Posterior vena cava (tissue), 2 donors: ENCODE measurements at regions of chr19 and their contacts with region 1.

Region 1: GRCh38 chr19:49949744-49950589 is 11.0 kb downstream of the SIGLEC11 start:
- DNase-seq: peak; percentile 37

Region 2: DNA sequence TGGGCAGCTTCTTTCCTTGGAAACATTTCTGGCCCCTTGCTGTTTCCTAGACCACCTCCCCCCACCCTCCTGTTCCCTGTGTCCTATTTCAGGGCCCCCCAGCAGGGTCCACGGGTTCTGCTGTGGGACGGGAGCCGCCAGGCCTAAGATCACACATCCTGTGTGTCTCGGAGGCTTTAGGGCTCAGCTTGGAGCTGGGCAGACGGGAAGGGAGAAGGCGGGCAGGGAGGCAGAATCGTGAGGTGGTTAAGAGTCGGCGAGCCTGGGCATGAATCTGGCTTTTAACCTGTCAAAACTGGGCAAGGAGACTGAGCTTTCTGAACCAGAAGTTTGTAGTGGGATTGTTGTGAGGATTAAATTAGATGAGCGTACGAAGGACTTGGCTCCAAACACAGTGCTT is 374.4 kb after region 1 on chr19:
- intact Hi-C with region 1: loop called in 1 of 2 experiments (anchors 5 kb)
- DNase-seq: no peak